Activated CD4-positive, alpha-beta memory T cell treated with anti-CD3 and anti-CD28 coated beads, Interleukin-2, amount 10 ng/mL, durations not matched to agents 7 days and 5 days (primary cell): ENCODE measurements at regions of chr11 and their contacts with region 1.

Region 1: DNA sequence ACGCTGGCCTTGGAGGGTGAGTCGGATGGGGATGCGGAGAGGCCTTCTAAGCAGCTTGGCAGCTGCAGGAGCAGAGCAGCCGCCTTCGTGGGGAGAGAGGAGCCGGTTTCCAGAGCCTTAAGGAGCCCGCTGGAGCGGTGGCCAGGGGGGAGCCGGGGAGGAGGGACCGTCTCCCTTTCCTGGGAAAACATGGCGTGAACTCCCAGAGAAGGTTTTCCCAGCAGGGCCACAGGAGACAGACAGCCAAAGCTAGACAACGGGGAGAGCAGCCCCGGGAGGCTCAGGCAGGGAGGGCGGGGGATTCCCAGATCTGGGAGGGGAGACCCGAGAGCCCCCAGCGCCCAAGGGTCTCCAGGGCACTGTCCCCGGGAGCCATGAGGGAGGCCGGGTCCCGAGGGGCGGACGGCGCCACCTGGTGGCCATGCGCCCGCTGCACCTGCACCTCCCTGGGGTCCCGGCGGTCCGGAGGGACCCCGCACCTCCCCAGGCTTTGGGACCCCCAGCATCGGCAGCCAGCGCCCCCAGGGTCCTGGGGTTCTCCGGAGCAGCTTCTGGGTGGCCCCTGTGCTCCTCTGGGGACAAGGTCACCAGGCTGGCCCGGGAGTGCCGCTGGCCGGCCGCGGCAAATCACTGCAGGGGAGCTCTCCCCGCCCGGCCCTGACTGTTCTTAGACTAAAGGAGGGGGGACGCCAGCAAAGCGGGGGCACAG is 2.4 kb upstream of the SYT8 start:
- DNase-seq: peak; percentile 65
- H3K4me3 Mint-ChIP-seq: no peak overlapping the region
- H3K27ac Mint-ChIP-seq: no peak overlapping the region
- H3K4me1 Mint-ChIP-seq: no peaks in the 10 kb centered on the region
- H3K27me3 Mint-ChIP-seq: peaks cover 5% of the 10 kb centered on the region

Region 2: GRCh38 chr11:1701091-1701807 is 131.1 kb before region 1 on chr11:
- CTCF ChIA-PET with region 1: interaction called, 27 read pairs
- POLR2A ChIA-PET with region 1: no interaction called
- DNase-seq: no peak
- H3K4me3 Mint-ChIP-seq: no peak overlapping the region
- H3K27ac Mint-ChIP-seq: no peak overlapping the region
- H3K4me1 Mint-ChIP-seq: peaks cover 8% of the 10 kb centered on the region
- H3K27me3 Mint-ChIP-seq: peaks cover 18% of the 10 kb centered on the region

Region 3: GRCh38 chr11:1706634-1707400 is 125.5 kb before region 1 on chr11:
- CTCF ChIA-PET with region 1: interaction called, 27 read pairs
- POLR2A ChIA-PET with region 1: no interaction called
- DNase-seq: peak; percentile 38
- H3K4me3 Mint-ChIP-seq: no peak overlapping the region
- H3K27ac Mint-ChIP-seq: no peak overlapping the region
- H3K4me1 Mint-ChIP-seq: peaks cover 6% of the 10 kb centered on the region
- H3K27me3 Mint-ChIP-seq: peaks cover 21% of the 10 kb centered on the region